Naive thymus-derived CD4-positive, alpha-beta T cell (primary cell): ENCODE measurements at regions of chr15 and their contacts with region 1.

Region 1: DNA sequence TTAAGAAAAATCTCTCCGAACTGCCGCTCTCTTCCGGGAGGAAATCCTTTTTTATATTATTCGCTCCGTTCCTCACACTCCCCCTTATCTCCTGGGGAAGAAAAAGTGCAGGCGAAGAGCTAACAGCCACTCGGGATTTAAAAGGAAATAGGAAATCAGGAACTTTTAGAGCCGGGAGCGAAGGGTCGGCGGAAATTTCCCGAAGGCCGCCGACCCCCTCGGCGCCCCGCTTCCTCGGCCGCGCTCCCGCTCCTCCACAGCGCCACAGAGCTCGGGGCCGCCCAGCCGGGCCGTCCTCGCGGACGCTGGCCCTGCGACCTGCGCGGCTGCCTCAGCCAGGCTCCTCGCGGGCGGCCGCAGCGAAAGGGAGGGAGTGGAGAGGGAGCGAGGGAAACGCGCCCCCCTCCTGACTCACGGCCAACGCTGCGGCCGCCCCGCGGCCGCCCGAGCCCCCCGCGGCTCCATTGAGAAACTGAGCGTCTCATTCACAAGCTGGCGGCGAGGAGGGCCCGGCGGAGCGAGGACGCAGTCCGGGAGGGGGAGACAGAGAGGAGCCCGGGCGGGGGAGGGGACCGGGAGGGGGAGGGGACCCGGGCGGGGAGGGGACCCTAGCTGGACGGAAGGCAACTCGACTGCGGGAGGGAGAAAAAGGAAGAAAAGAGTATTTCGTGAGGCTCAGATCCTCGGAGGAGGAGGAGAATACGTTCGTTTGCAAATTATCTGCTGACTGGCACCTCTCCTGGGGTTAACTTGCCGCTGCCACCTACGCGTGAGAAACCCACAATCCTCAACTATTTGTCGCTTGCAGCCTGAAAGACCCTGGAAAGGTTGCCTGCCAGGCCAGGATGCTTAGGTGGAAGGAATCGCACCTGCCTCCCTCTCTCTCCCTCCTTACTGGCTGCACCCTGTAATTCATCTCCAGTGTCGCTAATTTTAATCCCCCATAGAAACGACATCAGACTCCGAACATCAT is at the start of gene PTPN9:
- DNase-seq: peak; percentile 42 to 74 (median 61)
- ATAC-seq: peak; percentile 90
- H3K4me3 ChIP-seq: peak within 1 kb of the TSS; percentile 77
- H3K4me3 Mint-ChIP-seq: peak within 1 kb of the TSS; percentile 91 to 97 (median 94)
- H3K27ac ChIP-seq: peak within 1 kb of the TSS; percentile 78
- H3K27ac Mint-ChIP-seq: peak within 1 kb of the TSS; percentile 86 to 97 (median 90)
- H3K4me1 ChIP-seq: peaks cover 10 to 16% of the 10 kb centered on the region in 2 donors
- H3K4me1 Mint-ChIP-seq: peaks cover 13 to 27% (median 24%) of the 10 kb centered on the region in 7 donors
- H3K27me3 ChIP-seq: no peaks in the 10 kb centered on the region
- H3K27me3 Mint-ChIP-seq: no peaks in the 10 kb centered on the region
- total RNA-seq, gene PTPN9: 11.2 to 35.6 (median 15.7) TPM

Region 2: DNA sequence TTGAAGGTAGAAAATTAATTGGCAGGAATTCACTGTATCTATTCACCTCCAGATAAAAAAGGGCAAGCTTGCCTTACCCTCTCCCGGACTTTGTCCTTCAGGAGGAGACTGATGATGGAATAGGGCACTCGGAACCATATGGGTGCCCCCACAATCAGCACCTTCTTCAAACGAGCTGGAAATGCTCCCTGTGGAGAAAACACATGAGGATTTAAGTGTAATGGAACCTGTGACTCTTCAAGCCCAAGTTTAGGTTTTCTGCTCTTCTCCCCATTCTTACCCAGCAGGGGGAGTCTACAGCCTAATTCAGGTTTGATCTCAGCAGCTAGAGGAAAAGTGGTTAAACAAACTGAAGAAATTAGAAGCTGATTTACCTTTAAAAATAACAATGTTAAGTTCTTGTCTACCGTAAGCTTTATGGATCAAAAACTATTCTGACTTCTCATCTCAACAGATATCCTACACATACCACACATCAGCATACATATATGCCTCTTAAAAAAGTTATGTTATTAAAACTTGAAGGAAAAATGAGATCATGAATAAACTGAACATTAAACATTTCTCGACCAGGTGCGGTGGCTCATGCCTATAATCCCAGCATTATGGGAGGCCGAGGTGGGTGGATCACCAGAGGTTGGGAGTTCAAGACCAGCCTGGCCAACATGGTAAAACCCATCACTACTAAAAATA is 70.2 kb before region 1 on chr15:
- CTCF ChIA-PET with region 1: interaction called, 3 read pairs
- POLR2A ChIA-PET with region 1: interaction called, 3 read pairs
- intact Hi-C with region 1: loop called in 1 of 2 experiments (anchors 1 kb)
- DNase-seq: peak in 7 of 9 donors; percentile 38 to 65 (median 55)
- ATAC-seq: peak; percentile 37
- H3K4me3 ChIP-seq: no peak overlapping the region
- H3K4me3 Mint-ChIP-seq: no peak overlapping the region
- H3K27ac ChIP-seq: no peak overlapping the region
- H3K27ac Mint-ChIP-seq: peak overlapping the region in 5 of 9 donors; percentile 2 to 31 (median 21)
- H3K4me1 ChIP-seq: no peaks in the 10 kb centered on the region
- H3K4me1 Mint-ChIP-seq: peaks cover 0 to 5% (median 4%) of the 10 kb centered on the region in 7 donors
- H3K27me3 ChIP-seq: no peaks in the 10 kb centered on the region
- H3K27me3 Mint-ChIP-seq: no peaks in the 10 kb centered on the region

Region 3: DNA sequence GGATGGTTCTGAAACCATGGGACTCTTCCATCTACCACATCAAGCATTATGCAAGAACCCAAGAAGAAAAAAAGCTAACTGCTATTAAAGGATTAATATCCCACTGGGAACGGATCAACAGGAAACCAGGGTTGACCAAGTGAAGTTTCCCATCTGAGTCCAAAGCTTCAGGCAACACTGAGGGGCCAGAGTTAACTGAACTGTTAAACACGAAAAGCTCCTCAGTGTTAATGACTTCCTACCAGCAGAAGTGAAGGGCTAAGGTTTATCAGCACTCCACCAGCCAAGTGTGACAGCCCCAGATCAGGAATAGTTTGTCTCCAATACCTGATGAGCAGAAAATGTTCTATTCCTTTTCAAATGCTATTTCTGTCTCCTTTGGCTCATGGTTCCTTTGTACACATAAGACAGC is 36.8 kb before region 1 on chr15:
- CTCF ChIA-PET with region 1: no interaction called
- POLR2A ChIA-PET with region 1: no interaction called
- intact Hi-C with region 1: loop called in 1 of 2 experiments (anchors 5 kb)
- DNase-seq: no peak
- ATAC-seq: no peak
- H3K4me3 ChIP-seq: no peak overlapping the region
- H3K4me3 Mint-ChIP-seq: no peak overlapping the region
- H3K27ac ChIP-seq: no peak overlapping the region
- H3K27ac Mint-ChIP-seq: peak overlapping the region in 1 of 9 donors; percentile 9
- H3K4me1 ChIP-seq: no peaks in the 10 kb centered on the region
- H3K4me1 Mint-ChIP-seq: peaks cover 22 to 30% (median 26%) of the 10 kb centered on the region in 7 donors
- H3K27me3 ChIP-seq: no peaks in the 10 kb centered on the region
- H3K27me3 Mint-ChIP-seq: no peaks in the 10 kb centered on the region

Region 4: DNA sequence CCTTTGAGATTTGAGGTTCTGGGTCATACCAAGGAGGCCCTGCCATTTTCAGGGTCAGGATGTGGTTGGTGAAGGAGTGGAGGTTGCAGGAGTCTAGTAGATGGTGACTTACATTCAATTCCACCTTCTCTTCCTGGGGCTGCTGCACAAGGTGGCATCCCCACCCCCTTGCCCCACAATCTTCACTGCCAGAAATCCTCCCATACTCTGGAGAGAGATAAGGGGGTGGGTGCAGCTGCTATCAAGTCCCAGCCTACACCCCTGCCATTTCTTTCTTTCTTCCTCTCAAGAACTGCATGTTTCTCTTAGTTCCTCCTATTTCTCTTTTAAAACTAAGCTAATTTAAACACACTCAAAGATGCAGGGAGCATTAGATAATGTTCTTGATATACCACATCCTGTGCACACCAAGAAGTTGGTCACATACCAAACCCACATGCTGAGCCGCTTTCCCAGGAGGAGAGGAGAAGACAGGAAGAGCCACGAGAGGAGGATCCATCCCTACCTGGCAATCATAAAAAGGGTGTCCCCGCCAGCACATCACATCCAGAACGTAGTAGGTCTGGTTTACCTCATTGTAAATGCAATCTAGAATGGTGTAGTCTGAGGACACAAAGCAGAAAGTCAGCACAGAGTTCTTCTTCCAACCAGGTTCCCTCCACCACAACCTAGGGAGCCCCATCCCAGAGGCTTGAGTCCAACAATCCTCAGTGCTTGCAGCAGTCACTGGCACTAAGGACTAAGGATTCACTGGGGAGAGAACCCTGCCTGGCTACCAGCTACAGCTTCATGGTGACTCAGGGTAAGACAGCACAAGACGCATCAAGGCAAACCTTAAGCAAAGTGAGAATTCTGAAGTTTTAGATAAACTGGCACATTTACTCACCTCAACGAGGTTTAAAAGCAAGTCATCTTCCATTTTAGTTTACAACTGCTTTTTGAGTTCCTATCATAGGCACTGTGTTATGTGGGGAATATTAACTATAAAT is 27.8 kb after region 1 on chr15:
- CTCF ChIA-PET with region 1: no interaction called
- POLR2A ChIA-PET with region 1: interaction called, 13 read pairs
- intact Hi-C with region 1: loop called in 1 of 2 experiments (anchors 1 kb)
- DNase-seq: peak in 7 of 9 donors; percentile 18 to 55 (median 50)
- ATAC-seq: peak; percentile 76
- H3K4me3 ChIP-seq: peak overlapping the region; percentile 17
- H3K4me3 Mint-ChIP-seq: peak overlapping the region; percentile 65 to 82 (median 73)
- H3K27ac ChIP-seq: peak overlapping the region; percentile 59
- H3K27ac Mint-ChIP-seq: peak overlapping the region; percentile 48 to 92 (median 84)
- H3K4me1 ChIP-seq: peaks cover 41 to 42% of the 10 kb centered on the region in 2 donors
- H3K4me1 Mint-ChIP-seq: peaks cover 40 to 52% (median 43%) of the 10 kb centered on the region in 7 donors
- H3K27me3 ChIP-seq: no peaks in the 10 kb centered on the region
- H3K27me3 Mint-ChIP-seq: no peaks in the 10 kb centered on the region

Region 5: DNA sequence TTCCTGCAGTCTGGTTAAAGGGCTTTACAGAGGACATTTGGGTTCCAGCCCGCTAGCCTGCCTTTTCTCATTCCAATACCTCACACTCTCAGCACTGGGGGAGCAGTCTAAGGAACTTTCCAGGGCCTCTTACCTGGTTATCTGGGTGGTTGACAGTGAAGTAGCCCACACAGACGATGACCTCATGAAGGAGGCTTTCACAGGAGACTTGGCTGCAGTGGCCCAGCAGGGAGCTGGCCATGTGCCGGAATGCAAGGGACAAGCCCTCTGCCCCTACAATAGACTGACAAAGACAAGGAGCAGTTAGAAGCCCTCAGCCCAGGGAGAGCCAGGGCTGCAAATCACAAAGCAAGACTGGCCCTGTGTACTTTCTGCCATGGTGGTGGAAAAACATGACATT is 796.8 kb after region 1 on chr15:
- CTCF ChIA-PET with region 1: no interaction called
- POLR2A ChIA-PET with region 1: no interaction called
- intact Hi-C with region 1: no loop called
- DNase-seq: no peak
- ATAC-seq: no peak
- H3K4me3 ChIP-seq: no peak overlapping the region
- H3K4me3 Mint-ChIP-seq: no peak overlapping the region
- H3K27ac ChIP-seq: no peak overlapping the region
- H3K27ac Mint-ChIP-seq: no peak overlapping the region
- H3K4me1 ChIP-seq: no peaks in the 10 kb centered on the region
- H3K4me1 Mint-ChIP-seq: no peaks in the 10 kb centered on the region
- H3K27me3 ChIP-seq: no peaks in the 10 kb centered on the region
- H3K27me3 Mint-ChIP-seq: no peaks in the 10 kb centered on the region